ENCODE measurements at regions of chr4 and their contacts with region 1.

Region 1: DNA sequence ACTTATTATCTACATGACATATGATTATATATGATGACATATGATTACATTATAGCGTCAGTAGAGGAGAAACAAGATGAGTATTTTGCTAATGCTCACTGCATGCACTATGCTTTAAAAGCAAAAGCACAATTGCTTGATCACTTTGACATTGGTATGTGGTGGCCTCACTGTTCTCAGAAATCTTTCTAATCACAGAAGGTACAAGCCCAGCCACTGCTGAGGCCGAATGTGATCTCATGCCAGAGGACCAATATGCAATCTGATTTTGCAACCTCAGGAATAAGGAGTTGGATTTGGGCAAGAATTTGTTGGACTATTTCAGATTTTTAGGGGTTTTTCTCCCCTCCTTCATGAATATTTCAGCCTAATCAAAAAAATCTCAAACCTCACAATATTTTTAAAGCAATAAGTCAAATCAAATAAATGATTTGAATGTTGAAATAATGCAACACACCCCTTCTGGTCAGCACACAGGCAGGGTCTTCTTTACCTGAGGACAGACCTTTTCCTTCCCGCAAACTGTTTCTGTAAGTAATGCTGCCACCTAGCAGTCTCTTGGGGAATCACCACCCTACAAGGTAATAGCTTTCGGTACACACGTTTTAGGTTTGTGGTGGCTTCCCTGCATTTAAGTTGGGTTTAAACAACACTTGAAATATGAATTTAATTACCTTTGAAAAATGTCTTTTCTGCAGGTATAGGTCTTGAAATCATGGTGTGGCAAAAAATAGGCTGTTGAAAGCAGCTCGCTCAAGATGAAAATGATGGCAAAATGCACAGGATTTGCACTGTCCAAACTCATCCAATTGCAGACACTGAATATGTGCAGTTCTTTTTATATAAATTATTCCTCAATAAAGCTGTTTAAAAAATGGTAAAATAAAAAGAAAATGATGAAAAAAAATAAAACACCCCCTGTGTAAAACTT is 4.8 kb upstream of the CXCL13 start:
- DNase-seq: peak; percentile 18
- H3K4me3 ChIP-seq: no peak overlapping the region
- H3K27ac ChIP-seq: no peak overlapping the region
- H3K4me1 ChIP-seq: no peaks in the 10 kb centered on the region
- H3K27me3 ChIP-seq: no peaks in the 10 kb centered on the region
- CTCF ChIP-seq: peak; percentile 54 to 76 (median 73)
- EP300 ChIP-seq: no peak
- POLR2A ChIP-seq: no peak

Region 2: DNA sequence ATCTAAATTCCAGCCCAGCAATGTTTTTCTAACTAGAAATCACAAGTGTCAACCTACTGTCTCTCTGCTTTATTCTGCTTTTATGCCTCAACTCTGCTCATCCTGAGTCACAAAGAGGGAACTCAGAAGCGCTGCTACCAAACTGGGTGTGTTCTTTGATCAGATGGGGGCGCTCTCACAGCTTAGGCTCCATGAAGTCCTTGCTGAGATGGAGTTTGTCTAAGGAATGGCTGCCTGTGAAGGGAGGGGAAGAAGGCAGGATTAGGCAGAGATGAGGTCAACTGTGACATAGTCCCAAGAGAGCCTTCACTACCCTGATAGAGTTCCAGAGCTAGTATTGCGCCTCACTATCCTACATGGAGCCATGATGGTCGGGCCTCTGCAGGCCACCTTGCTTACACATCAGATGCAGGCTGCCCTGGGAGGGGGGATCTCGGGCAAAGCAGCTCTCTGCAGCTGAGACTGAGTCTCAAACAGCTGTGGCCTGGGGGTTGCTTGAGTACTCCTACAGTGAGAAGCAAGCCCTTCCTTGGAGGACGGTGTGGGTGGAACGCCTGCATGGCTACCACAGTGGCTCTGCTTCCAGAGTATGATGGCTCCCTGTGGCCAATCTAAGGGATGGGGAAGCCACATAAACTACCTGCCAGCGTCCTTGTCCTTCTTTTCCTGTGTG is 223.9 kb before region 1 on chr4:
- in situ Hi-C with region 1: loop called in 3 of 4 experiments (anchors 10 kb)
- intact Hi-C with region 1: no loop called
- DNase-seq: no peak
- H3K4me3 ChIP-seq: no peak overlapping the region
- H3K27ac ChIP-seq: no peak overlapping the region
- H3K4me1 ChIP-seq: no peaks in the 10 kb centered on the region
- H3K27me3 ChIP-seq: no peaks in the 10 kb centered on the region
- CTCF ChIP-seq: no peak
- EP300 ChIP-seq: no peak
- POLR2A ChIP-seq: no peak

Region 3: GRCh38 chr4:77385124-77385969 is 215.4 kb before region 1 on chr4:
- in situ Hi-C with region 1: loop called in 2 of 4 experiments (anchors 10 kb)
- intact Hi-C with region 1: loop called (anchors 5 kb)
- DNase-seq: peak; percentile 71
- H3K4me3 ChIP-seq: no peak overlapping the region
- H3K27ac ChIP-seq: no peak overlapping the region
- H3K4me1 ChIP-seq: no peaks in the 10 kb centered on the region
- H3K27me3 ChIP-seq: no peaks in the 10 kb centered on the region
- CTCF ChIP-seq: peak; percentile 66 to 83 (median 76)
- EP300 ChIP-seq: no peak
- POLR2A ChIP-seq: no peak

Region 4: DNA sequence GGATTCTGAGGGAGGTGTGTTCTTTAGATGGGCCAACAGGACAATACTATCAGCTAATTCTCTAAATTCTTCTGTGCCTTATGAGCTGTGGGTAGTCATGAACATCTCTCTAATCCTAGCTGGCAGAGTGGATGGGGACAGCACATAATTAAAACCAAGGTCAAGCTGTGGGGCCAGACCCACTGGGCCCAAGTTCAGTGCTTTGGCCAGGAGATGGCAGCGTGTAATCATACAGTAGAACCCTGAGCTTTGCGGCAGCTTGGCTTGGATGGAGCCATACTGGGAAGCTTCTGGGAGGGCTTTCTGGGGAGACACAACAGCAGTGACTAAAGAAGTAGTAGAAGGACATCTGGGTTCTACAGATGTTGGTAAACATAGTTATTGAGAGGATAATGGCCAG is 135.5 kb before region 1 on chr4:
- in situ Hi-C with region 1: loop called in 1 of 4 experiments (anchors 25 kb)
- intact Hi-C with region 1: no loop called
- DNase-seq: peak; percentile 15
- H3K4me3 ChIP-seq: no peak overlapping the region
- H3K27ac ChIP-seq: no peak overlapping the region
- H3K4me1 ChIP-seq: no peaks in the 10 kb centered on the region
- H3K27me3 ChIP-seq: no peaks in the 10 kb centered on the region
- CTCF ChIP-seq: peak in 4 of 5 experiments; percentile 38 to 58 (median 49)
- EP300 ChIP-seq: no peak
- POLR2A ChIP-seq: no peak